CD4-positive, alpha-beta T cell (primary cell): ENCODE measurements at regions of chr7 and their contacts with region 1.

Region 1: DNA sequence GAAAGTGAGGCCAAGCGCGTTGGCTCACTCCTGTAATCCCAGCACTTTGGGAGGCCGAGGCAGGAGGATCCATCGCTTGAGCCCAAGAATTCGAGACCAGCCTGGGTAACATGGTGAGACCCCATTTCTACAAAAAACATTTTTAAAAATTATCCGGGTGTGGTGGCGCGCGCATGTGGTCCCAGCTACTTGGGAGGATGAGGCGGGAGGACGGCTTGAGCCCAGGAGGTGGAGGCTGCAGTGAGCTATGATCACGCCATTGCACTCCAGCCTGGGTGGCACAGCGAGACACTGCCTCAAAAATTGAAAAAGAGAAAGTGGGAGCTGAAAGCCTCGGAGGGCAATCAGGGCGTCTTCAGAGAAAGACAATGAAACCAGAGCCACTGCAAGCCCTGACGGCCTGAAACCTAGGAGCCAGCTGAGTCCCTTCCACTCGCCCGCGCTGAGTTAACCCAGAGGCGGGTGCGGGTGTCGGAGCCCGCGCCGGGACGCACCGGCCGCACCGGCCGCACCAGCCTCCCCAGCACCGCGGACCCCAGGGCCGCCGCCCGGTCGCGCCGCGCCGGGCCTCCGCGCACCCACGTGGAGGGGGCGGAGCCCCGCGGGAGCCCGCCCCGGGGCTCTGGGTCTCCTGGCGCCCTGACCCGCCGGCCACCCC is 22.4 kb downstream of the ZFAND2A start:
- DNase-seq: no peak
- ATAC-seq: peak; percentile 46
- H3K4me3 ChIP-seq: peak overlapping the region; percentile 62
- H3K4me3 Mint-ChIP-seq: peak overlapping the region; percentile 95
- H3K27ac ChIP-seq: peak overlapping the region; percentile 50 to 65
- H3K27ac Mint-ChIP-seq: peak overlapping the region; percentile 71
- H3K4me1 ChIP-seq: peaks cover 20% of the 10 kb centered on the region
- H3K4me1 Mint-ChIP-seq: peaks cover 19% of the 10 kb centered on the region
- H3K27me3 ChIP-seq: no peaks in the 10 kb centered on the region
- H3K27me3 Mint-ChIP-seq: no peaks in the 10 kb centered on the region
- CTCF ChIP-seq: no peak

Region 2: GRCh38 chr7:1065263-1066260 is 72.1 kb before region 1 on chr7:
- CTCF ChIA-PET with region 1: no interaction called
- POLR2A ChIA-PET with region 1: no interaction called
- intact Hi-C with region 1: no loop called
- DNase-seq: peak; percentile 73 to 90 (median 82)
- ATAC-seq: peak; percentile 97
- H3K4me3 ChIP-seq: peak overlapping the region; percentile 42
- H3K4me3 Mint-ChIP-seq: peak overlapping the region; percentile 66
- H3K27ac ChIP-seq: no peak overlapping the region
- H3K27ac Mint-ChIP-seq: no peak overlapping the region
- H3K4me1 ChIP-seq: peaks cover 18% of the 10 kb centered on the region
- H3K4me1 Mint-ChIP-seq: peaks cover 20% of the 10 kb centered on the region
- H3K27me3 ChIP-seq: peaks cover 0 to 4% of the 10 kb centered on the region in 2 experiments
- H3K27me3 Mint-ChIP-seq: no peaks in the 10 kb centered on the region
- CTCF ChIP-seq: peak; percentile 97

Region 3: GRCh38 chr7:1159891-1160668 is 22.4 kb after region 1 on chr7 and contains the start of gene ZFAND2A:
- CTCF ChIA-PET with region 1: interaction called, 3 read pairs
- POLR2A ChIA-PET with region 1: interaction called, 33 read pairs
- intact Hi-C with region 1: loop called (anchors 1 kb)
- DNase-seq: peak; percentile 96 to 99 (median 98)
- ATAC-seq: peak; percentile 97
- H3K4me3 ChIP-seq: peak within 1 kb of the TSS; percentile 95
- H3K4me3 Mint-ChIP-seq: peak within 1 kb of the TSS; percentile 92
- H3K27ac ChIP-seq: peak within 1 kb of the TSS; percentile 88 to 94
- H3K27ac Mint-ChIP-seq: peak within 1 kb of the TSS; percentile 87
- H3K4me1 ChIP-seq: peaks cover 17% of the 10 kb centered on the region
- H3K4me1 Mint-ChIP-seq: peaks cover 29% of the 10 kb centered on the region
- H3K27me3 ChIP-seq: no peaks in the 10 kb centered on the region
- H3K27me3 Mint-ChIP-seq: no peaks in the 10 kb centered on the region
- CTCF ChIP-seq: no peak
- total RNA-seq, gene ZFAND2A: 92.3 to 92.5 TPM

Region 4: DNA sequence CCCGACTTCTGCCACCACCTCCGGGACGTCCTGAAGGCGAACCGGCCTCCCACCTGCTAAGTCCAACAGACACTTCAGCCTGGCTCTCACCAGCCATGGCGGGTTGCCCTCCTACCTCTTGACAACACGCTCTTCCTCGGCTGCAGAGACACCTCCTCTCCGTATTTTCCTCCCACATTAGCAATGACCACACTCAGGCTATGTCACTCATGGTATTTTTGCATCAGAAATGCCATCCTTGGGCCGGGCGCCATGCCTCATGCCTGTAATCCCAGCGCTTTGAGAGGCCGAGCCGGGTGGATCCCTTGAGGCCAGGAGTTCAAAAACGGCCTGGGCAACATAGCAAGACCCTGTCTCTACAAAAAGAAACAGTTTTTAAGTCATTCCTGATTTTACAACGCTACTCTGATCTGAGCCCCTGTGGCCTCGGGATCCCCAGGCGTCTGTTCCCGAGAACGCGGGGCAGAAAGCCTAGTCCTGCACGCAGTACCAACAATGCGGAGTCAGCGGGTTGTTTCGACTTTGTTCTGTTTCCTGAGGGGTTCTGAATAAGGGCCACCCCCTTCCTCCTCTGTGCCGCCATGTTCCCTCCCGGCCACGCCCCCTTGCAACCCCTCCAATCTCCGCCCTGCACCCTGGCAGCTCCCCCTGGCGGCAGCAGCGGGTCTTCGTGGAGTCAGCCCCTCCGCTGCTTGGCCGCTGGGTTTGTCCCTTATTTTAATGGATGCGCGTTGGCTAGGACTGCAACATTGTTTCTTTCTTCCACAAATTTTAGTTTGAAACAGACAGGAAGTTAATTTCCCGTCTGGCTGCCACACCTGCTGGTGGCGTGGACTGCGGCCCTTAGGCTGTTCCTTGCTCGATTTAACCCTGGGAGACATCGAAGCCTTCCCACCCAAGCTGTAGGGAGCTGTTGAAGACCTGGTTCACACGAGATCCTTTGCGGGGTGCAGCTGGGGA is 32.0 kb after region 1 on chr7:
- CTCF ChIA-PET with region 1: interaction called, 6 read pairs
- POLR2A ChIA-PET with region 1: interaction called, 8 read pairs
- intact Hi-C with region 1: loop called in 1 of 2 experiments (anchors 5 kb)
- DNase-seq: peak; percentile 52 to 96 (median 91)
- ATAC-seq: peak; percentile 100
- H3K4me3 ChIP-seq: peak overlapping the region; percentile 39
- H3K4me3 Mint-ChIP-seq: peak overlapping the region; percentile 87
- H3K27ac ChIP-seq: no peak overlapping the region
- H3K27ac Mint-ChIP-seq: peak overlapping the region; percentile 85
- H3K4me1 ChIP-seq: peaks cover 18% of the 10 kb centered on the region
- H3K4me1 Mint-ChIP-seq: peaks cover 11% of the 10 kb centered on the region
- H3K27me3 ChIP-seq: no peaks in the 10 kb centered on the region
- H3K27me3 Mint-ChIP-seq: no peaks in the 10 kb centered on the region
- CTCF ChIP-seq: peak; percentile 91